ENCODE measurements at regions of chr10 and their contacts with region 1.

Region 1: DNA sequence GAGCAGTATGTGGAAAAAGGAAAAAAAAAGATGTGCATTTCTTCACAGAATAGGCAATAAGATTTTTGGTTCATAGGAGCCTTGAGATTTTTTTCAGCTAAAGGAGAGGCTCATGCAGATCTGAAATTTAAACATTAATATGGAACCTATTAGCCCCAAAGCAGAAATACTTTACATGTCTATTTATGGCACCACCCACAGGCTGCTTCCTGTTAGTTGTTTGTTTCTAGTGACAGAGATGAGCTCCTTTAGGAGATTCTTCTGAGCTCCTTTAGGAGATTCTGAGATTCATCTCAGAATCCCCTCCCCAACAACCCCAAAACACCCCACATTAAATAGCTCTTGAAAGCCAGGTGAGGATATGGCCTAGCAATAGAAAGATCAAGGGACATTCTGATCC is 27.9 kb upstream of the HPS1 start:
- DNase-seq: no peak
- ATAC-seq: no peak

Region 2: DNA sequence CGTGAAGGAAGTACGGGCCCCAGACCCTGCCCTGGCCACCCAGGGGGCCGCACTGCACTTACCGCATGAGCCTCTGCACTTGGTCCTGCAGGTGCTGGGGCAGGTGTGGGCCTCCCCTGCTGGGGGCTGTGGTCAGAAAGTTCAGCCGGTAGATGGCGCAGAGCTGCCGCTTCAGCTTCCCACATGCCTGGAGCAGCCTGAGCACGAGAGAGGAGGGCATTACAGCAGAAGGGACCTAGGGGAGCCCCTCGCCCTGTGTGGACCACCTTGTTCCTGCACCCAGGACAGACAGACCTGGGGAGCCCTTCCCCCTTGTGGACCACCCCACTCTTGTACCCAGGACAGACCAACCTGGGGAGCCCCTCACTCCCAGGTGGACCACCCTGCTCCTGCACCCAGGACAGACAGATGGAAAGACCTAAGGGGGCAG is 50.9 kb before region 1 on chr10:
- intact Hi-C with region 1: no loop called
- DNase-seq: no peak
- ATAC-seq: peak; percentile 35

Region 3: DNA sequence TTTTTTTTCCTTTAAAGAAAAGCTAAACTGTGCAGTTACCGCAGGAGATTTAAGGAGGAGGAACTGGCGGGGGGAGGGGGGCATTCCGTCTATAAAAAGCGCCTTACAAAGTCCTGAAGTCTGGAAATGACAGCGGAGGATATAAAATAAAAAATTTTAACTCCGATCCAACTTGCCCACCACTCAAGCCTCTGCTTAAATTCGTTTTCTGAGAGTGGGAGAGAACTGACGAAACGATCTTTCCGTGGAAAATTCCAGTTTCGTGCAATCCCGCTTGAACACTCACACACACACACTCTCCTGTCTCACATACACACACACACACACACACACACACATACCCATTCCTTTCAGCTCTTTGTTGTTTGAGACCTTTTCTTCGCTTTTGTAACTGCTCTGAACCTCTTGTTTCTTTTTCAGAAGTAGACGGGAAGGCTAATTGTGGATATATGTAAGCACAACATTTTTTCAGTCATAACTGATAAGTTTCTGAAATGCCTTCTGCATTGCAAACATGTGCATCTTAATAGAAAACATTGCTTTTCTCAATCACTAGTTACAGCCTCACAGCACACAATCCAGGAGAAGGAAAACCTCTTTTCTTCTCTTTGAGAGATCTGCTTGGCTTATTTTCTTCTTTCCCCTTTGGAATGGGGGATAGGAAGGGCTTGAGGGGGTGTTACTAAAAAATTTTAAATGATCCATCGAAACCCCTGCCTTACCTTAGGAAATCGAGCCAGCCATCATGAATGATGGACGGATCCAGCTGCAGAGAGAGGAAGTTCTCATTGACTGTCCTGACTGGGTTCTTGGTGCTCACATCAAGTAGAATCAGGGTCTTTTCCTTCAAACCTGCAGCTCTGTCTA is 760.4 kb after region 1 on chr10:
- intact Hi-C with region 1: loop called (anchors 5 kb)
- DNase-seq: no peak
- ATAC-seq: no peak

Measured in left ventricle myocardium superior (tissue), 1 donor.